Heart right ventricle (tissue), 16 donors: ENCODE measurements at regions of chr1 and their contacts with region 1.

Region 1: GRCh38 chr1:243850452-243851256 is 611 bp upstream of the AKT3 start:
- DNase-seq: peak; percentile 78 to 81
- ATAC-seq: peak; percentile 49 to 76 (median 66)
- H3K4me3 ChIP-seq: peak overlapping the region; percentile 76 to 90 (median 81)
- H3K27ac ChIP-seq: peak overlapping the region; percentile 92 to 99 (median 96)
- H3K4me1 ChIP-seq: peaks cover 0 to 24% (median 14%) of the 10 kb centered on the region in 9 donors
- H3K27me3 ChIP-seq: peaks cover 0 to 42% (median 16%) of the 10 kb centered on the region in 7 donors
- CTCF ChIP-seq: no peak

Region 2: DNA sequence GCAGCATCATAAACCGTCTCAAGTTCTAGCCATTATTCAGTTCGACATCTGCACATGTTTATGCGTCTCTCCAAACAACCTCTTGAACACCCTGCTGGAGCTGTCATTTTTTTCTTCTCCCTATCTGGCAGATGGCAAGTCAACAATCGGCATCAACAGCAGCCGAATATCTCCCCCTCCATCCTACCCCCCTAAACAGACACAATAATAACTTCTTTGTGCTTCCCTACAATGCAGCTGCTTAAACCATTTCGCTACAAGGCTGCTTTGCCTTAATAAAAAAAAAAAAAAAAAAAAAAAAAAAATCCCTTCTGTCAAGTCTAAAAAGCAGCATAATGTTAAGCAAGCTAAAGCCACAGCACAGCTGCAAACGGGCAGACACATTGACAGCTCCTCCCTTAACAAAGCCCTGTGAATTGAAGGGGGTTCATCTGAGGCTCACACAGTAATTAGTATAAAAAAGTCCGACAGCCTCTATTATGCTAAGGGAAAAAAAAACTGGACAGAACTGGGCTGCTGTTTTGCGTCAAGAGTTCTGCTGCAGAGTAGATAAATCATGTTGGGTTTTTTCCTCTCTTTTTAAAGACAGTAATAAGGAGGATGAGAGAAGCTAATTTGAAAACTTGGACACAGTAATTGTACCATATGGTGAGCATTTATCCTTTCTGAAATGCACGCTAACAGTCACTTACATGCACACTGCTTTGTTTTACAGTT is 137.0 kb before region 1 on chr1:
- intact Hi-C with region 1: loop called in 1 of 10 experiments (anchors 10 kb)
- DNase-seq: peak in 1 of 2 donors; percentile 17
- ATAC-seq: peak in 7 of 8 donors; percentile 31 to 89 (median 83)
- H3K4me3 ChIP-seq: peak overlapping the region in 3 of 10 donors; percentile 5 to 25 (median 11)
- H3K27ac ChIP-seq: peak overlapping the region in 3 of 10 donors; percentile 3 to 22 (median 10)
- H3K4me1 ChIP-seq: peaks cover 0 to 38% (median 11%) of the 10 kb centered on the region in 9 donors
- H3K27me3 ChIP-seq: no peaks in the 10 kb centered on the region
- CTCF ChIP-seq: no peak

Region 3: GRCh38 chr1:243791586-243792267 is 58.9 kb before region 1 on chr1:
- intact Hi-C with region 1: loop called in 2 of 10 experiments (anchors 5 to 10 kb)
- DNase-seq: no peak
- ATAC-seq: peak in 5 of 8 donors; percentile 44 to 89 (median 55)
- H3K4me3 ChIP-seq: no peak overlapping the region
- H3K27ac ChIP-seq: peak overlapping the region in 8 of 10 donors; percentile 9 to 66 (median 28)
- H3K4me1 ChIP-seq: peaks cover 3 to 55% (median 31%) of the 10 kb centered on the region in 9 donors
- H3K27me3 ChIP-seq: no peaks in the 10 kb centered on the region
- CTCF ChIP-seq: no peak

Region 4: GRCh38 chr1:243798726-243799125 is 51.9 kb before region 1 on chr1:
- intact Hi-C with region 1: loop called in 2 of 10 experiments (anchors 5 to 10 kb)
- DNase-seq: no peak
- ATAC-seq: no peak
- H3K4me3 ChIP-seq: no peak overlapping the region
- H3K27ac ChIP-seq: no peak overlapping the region
- H3K4me1 ChIP-seq: peaks cover 0 to 27% (median 0%) of the 10 kb centered on the region in 9 donors
- H3K27me3 ChIP-seq: no peaks in the 10 kb centered on the region
- CTCF ChIP-seq: no peak

Region 5: GRCh38 chr1:243917177-243917862 is 66.7 kb after region 1 on chr1:
- intact Hi-C with region 1: no loop called
- DNase-seq: peak; percentile 9 to 17
- ATAC-seq: peak; percentile 59 to 91 (median 84)
- H3K4me3 ChIP-seq: peak overlapping the region; percentile 22 to 67 (median 53)
- H3K27ac ChIP-seq: peak overlapping the region in 6 of 10 donors; percentile 5 to 39 (median 15)
- H3K4me1 ChIP-seq: peaks cover 0 to 16% (median 9%) of the 10 kb centered on the region in 9 donors
- H3K27me3 ChIP-seq: peaks cover 0 to 48% (median 30%) of the 10 kb centered on the region in 7 donors
- CTCF ChIP-seq: peak in 3 of 9 donors; percentile 5 to 34 (median 18)

Region 6: GRCh38 chr1:243944429-243945160 is 93.9 kb after region 1 on chr1:
- intact Hi-C with region 1: no loop called
- DNase-seq: no peak
- ATAC-seq: no peak
- H3K4me3 ChIP-seq: no peak overlapping the region
- H3K27ac ChIP-seq: no peak overlapping the region
- H3K4me1 ChIP-seq: peaks cover 0 to 10% (median 0%) of the 10 kb centered on the region in 9 donors
- H3K27me3 ChIP-seq: peaks cover 0 to 20% (median 0%) of the 10 kb centered on the region in 7 donors
- CTCF ChIP-seq: no peak

Region 7: GRCh38 chr1:244047621-244048471 is 197.2 kb after region 1 on chr1:
- intact Hi-C with region 1: loop called in 1 of 10 experiments (anchors 10 kb)
- DNase-seq: peak; percentile 99
- ATAC-seq: peak; percentile 95 to 99 (median 98)
- H3K4me3 ChIP-seq: peak overlapping the region; percentile 67 to 99 (median 85)
- H3K27ac ChIP-seq: peak overlapping the region; percentile 89 to 99 (median 98)
- H3K4me1 ChIP-seq: peaks cover 0 to 41% (median 32%) of the 10 kb centered on the region in 9 donors
- H3K27me3 ChIP-seq: no peaks in the 10 kb centered on the region
- CTCF ChIP-seq: peak in 2 of 9 donors; percentile 7 to 12